B cell (primary cell): ENCODE measurements at regions of chr20 and their contacts with region 1.

Region 1: DNA sequence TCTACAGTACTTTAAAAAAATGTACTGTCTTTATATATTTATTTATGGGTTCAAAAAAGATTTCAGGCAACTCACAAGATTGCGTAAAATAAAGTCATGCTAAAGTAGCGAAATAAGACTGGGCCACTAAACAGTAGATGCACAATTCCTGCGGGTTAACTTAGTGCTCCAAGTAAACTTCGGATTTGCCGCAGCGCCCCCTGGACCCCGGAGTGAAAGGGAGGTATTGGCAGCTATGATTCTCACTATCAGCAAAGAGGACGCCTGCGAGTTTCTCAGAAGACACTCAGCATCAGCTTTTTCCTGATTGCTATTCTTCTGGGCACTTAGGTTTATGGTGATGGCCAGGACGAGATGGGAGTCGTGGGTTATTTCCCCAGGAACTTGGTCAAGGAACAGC is 1.4 kb downstream of the OTOR start:
- DNase-seq: no peak
- ATAC-seq: no peak
- H3K4me3 ChIP-seq: no peak overlapping the region
- H3K4me3 Mint-ChIP-seq: no peak overlapping the region
- H3K27ac ChIP-seq: no peak overlapping the region
- H3K27ac Mint-ChIP-seq: no peak overlapping the region
- H3K4me1 ChIP-seq: no peaks in the 10 kb centered on the region
- H3K4me1 Mint-ChIP-seq: no peaks in the 10 kb centered on the region
- H3K27me3 ChIP-seq: peaks cover 0 to 3% (median 0%) of the 10 kb centered on the region in 4 experiments
- H3K27me3 Mint-ChIP-seq: peaks cover 39% of the 10 kb centered on the region
- CTCF ChIP-seq: no peak

Region 2: GRCh38 chr20:16729565-16730456 is 19.8 kb before region 1 on chr20 and contains the start of gene SNRPB2:
- CTCF ChIA-PET with region 1: no interaction called
- POLR2A ChIA-PET with region 1: no interaction called
- intact Hi-C with region 1: no loop called
- DNase-seq: peak; percentile 93
- ATAC-seq: peak; percentile 97
- H3K4me3 ChIP-seq: peak within 1 kb of the TSS; percentile 65 to 95 (median 93)
- H3K4me3 Mint-ChIP-seq: peak within 1 kb of the TSS; percentile 100
- H3K27ac ChIP-seq: peak within 1 kb of the TSS; percentile 79 to 90
- H3K27ac Mint-ChIP-seq: peak within 1 kb of the TSS; percentile 99
- H3K4me1 ChIP-seq: peaks cover 16 to 20% of the 10 kb centered on the region in 2 donors
- H3K4me1 Mint-ChIP-seq: peaks cover 39% of the 10 kb centered on the region
- H3K27me3 ChIP-seq: peaks cover 2 to 23% (median 16%) of the 10 kb centered on the region in 4 experiments
- H3K27me3 Mint-ChIP-seq: peaks cover 22% of the 10 kb centered on the region
- CTCF ChIP-seq: no peak
- total RNA-seq, gene SNRPB2: 36.2 and 38.3 TPM in 2 replicates

Region 3: DNA sequence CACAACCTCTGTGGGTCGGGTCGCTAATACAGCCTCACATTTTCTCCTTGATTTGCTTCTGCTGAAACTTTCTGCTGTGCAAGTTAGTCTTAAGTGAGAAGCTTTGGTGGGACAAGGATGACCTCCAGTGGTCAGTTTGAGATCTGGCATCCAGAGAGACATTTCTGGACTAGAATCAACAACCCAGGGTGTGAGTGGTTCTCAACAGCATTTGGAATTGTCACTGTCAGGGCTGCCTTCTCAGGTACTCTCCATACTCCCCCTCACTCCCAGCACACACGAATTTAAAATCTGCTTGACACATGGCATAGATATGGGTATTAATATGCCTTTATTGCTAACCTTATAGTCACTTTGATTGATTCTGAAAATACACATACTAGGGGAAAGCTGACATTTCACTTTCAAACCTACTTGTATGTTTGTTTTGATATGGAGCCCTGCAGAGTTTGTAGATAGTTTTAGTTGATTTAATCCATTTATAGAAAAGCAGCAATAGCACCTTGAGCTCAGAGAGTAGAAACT is 11.8 kb after region 1 on chr20:
- CTCF ChIA-PET with region 1: interaction called, 11 read pairs
- POLR2A ChIA-PET with region 1: no interaction called
- intact Hi-C with region 1: no loop called
- DNase-seq: peak; percentile 56
- ATAC-seq: peak; percentile 53
- H3K4me3 ChIP-seq: no peak overlapping the region
- H3K4me3 Mint-ChIP-seq: no peak overlapping the region
- H3K27ac ChIP-seq: no peak overlapping the region
- H3K27ac Mint-ChIP-seq: no peak overlapping the region
- H3K4me1 ChIP-seq: no peaks in the 10 kb centered on the region
- H3K4me1 Mint-ChIP-seq: no peaks in the 10 kb centered on the region
- H3K27me3 ChIP-seq: peaks cover 0 to 19% (median 1%) of the 10 kb centered on the region in 4 experiments
- H3K27me3 Mint-ChIP-seq: peaks cover 41% of the 10 kb centered on the region
- CTCF ChIP-seq: peak; percentile 76

Region 4: DNA sequence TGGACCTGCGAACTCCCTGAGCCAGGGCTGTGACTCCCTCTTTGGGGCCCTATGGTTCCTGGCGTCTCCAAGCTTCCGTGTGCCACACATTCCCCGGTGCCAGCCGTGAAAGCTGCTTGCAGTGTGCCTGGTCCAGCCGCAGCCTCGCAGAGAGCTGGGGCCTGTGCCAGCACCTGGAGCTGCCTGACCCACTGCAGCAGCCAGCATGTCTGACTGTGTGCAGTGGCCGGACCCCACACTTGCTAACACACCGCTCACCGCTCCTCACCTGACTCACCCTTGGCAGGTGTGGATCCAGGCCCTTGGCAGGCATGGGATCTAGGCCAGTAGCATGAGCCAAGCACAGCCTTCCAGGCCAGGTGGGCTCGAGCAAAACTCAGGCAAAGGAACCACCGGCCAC is 226.1 kb after region 1 on chr20:
- CTCF ChIA-PET with region 1: no interaction called
- POLR2A ChIA-PET with region 1: no interaction called
- intact Hi-C with region 1: no loop called
- DNase-seq: no peak
- ATAC-seq: no peak
- H3K4me3 ChIP-seq: no peak overlapping the region
- H3K4me3 Mint-ChIP-seq: no peak overlapping the region
- H3K27ac ChIP-seq: no peak overlapping the region
- H3K27ac Mint-ChIP-seq: no peak overlapping the region
- H3K4me1 ChIP-seq: no peaks in the 10 kb centered on the region
- H3K4me1 Mint-ChIP-seq: no peaks in the 10 kb centered on the region
- H3K27me3 ChIP-seq: no peaks in the 10 kb centered on the region
- H3K27me3 Mint-ChIP-seq: no peaks in the 10 kb centered on the region
- CTCF ChIP-seq: no peak